Activated CD4-positive, alpha-beta T cell treated with anti-CD3 and anti-CD28 coated beads, Interleukin-2, amount 10 ng/mL, durations not matched to agents 24 days and 14 days (primary cell): ENCODE measurements at regions of chr6 and their contacts with region 1.

Region 1: DNA sequence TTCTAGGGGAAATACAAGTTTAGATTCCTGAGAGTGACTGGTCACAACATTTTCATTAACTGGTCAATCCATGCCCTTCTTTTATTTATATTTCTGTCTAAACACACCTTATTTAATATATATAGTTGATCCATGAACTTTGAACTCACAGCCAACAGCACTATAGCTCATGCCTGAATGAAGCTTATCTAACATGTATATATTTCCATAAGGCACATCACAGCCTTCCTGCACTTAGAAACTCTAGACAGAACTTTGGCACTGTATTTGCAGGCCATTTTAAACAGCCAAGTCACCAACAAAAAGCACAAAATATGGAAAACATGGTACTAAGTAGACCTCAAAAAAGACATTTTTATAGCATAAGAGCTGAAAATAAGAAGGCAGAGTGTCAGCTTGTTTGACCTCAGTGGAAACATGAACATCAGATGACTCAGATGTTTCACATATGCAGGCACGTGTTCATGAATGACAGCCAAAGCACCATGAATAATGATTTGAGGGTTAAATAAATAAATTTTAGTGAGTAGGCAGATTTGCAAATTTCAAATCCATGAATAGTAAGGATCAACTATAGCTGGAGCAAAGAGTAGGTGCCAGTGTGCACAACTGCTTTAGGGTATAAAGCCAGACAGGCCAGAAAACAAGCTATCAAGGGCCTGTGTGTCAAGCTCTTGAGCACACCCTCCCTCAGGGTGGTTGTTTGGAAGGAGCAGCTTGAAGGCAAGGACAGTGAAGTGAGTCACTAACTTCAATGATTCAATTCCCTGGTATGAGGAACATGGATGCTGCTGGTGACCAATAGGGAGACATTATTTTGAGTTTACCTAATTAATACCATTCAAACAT is 88.9 kb upstream of the NT5E start:
- DNase-seq: no peak
- H3K4me3 Mint-ChIP-seq: no peak overlapping the region
- H3K27ac Mint-ChIP-seq: peak overlapping the region; percentile 65
- H3K4me1 Mint-ChIP-seq: peaks cover 12% of the 10 kb centered on the region
- H3K27me3 Mint-ChIP-seq: no peaks in the 10 kb centered on the region

Region 2: DNA sequence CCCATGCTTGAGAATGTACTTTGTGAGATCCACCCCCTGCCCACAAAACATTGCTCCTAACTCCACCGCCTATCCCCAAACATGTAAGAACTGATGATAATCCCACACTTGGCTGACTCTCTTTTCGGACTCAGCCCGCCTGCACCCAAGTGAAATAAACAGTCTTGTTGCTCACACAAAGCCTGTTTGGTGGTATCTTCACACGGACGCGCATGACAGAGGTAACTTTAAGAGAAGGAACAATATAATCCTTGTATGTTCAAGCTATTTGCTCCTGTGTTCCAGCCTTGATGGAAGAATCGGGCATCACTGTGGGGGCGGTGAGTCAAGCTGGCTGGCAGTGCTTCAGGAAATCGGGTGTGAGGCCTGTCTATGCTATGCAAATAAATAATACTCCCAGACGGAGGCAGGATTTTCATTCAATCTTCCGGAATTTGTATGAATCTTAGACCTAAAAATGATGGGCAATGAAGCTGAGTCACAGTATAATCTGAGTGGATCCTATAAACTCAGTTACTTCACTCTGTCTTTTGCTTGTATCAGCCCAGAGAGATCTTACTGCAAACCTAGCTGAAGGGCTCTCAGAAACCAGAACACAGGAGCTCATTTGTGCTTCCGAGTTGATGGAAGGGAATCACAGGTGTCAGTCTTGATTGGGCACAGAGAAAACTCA is 43.6 kb after region 1 on chr6:
- intact Hi-C with region 1: loop called (anchors 5 kb)
- DNase-seq: peak; percentile 55
- H3K4me3 Mint-ChIP-seq: peak overlapping the region; percentile 40
- H3K27ac Mint-ChIP-seq: peak overlapping the region; percentile 73
- H3K4me1 Mint-ChIP-seq: peaks cover 62% of the 10 kb centered on the region
- H3K27me3 Mint-ChIP-seq: peaks cover 2% of the 10 kb centered on the region

Region 3: GRCh38 chr6:85460921-85461797 is 100.1 kb after region 1 on chr6:
- intact Hi-C with region 1: loop called (anchors 1 kb)
- DNase-seq: peak; percentile 91
- H3K4me3 Mint-ChIP-seq: peak overlapping the region; percentile 70
- H3K27ac Mint-ChIP-seq: peak overlapping the region; percentile 93
- H3K4me1 Mint-ChIP-seq: peaks cover 91% of the 10 kb centered on the region
- H3K27me3 Mint-ChIP-seq: no peaks in the 10 kb centered on the region

Region 4: DNA sequence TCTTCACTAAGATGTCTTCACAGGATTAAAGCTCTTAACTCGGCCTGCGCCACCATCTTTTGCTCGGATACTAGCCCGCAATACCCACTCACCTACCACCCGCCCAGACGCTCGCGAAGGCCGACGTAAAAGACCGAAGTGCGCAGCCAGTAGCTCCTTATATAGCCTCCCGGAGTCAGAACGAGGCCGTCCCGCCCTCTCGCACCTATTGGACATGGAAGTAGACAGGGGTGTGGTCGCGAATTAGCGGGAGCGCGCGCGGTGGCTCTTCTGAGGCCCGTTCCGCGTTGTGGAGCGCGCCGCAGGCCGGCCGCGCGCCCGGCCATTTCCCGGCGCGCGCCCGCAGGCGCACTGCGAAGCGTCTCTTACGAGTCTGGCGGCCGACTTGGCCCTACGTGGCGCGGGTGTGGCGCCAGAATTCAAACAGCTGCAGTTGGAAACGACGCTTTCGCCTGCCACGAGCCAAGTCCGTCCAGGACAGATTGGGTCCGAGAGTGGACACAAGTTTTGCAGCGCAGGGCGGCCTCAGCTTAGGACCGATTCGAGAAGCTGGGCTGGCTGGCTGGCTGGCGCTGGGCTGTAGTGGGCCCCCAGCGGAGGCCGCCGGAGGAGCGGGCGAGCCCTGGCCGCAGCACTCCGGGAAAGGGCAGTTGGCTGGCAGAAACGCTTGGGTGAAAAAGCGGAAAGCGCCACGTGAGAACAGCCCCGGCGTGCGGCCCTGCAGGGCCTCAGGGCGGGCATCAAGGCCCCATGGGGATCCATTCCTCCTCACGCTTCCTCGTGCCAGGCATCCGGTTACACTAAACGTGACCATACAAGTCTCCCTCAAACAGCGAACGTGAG is 317.8 kb after region 1 on chr6:
- intact Hi-C with region 1: loop called (anchors 5 kb)
- DNase-seq: peak; percentile 99
- H3K4me3 Mint-ChIP-seq: peak overlapping the region; percentile 95
- H3K27ac Mint-ChIP-seq: peak overlapping the region; percentile 97
- H3K4me1 Mint-ChIP-seq: peaks cover 38% of the 10 kb centered on the region
- H3K27me3 Mint-ChIP-seq: no peaks in the 10 kb centered on the region